CD4-positive, alpha-beta T cell (primary cell): ENCODE measurements at regions of chr10 and their contacts with region 1.

Region 1: DNA sequence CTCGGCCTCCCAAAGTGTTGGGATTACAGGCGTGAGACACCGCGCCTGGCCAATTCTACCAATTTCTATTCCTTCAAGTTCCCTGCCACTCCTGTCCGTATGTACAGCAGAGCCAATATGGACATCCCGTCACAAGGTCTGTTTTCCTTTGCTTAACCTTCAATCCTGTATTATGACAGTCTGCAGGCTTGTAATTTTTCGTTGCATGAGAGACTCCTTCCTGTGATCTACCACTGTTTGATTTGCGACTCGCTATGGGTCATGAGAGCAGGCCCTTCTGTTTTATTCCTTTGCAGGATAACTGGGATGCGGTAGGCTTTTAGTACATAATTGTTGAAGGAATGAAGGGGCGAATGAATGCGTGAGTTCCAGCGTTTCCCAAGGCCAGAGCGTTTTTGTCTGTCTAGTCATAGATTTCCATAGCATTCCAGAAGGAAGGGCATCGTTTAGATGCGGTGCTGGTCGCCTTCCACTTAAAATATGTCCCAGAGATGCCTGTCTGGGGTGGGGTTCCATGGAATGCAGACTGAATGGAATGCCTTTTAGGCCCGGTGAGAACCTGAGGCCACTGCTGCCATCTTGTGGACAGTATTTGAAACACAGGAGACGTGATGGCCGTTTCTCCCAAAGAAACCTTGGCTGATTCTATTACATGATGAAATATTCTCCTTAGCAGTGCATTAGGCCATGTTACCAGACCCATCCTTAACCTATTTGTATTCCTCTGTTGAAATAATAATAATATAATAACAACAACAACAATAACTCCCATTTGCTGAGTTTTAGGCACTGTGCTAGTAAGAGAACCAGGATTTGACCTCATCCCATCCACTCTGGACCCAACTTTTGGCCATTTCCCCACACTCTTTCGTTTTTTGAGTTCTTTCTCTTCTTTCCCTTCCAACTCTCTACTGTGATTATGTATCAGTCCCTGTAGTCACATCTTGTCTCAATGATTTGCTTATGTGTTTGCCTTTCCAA is 193.2 kb downstream of the MYOF start:
- DNase-seq: peak; percentile 20 to 71 (median 36)
- ATAC-seq: no peak
- H3K4me3 ChIP-seq: no peak overlapping the region
- H3K4me3 Mint-ChIP-seq: no peak overlapping the region
- H3K27ac ChIP-seq: no peak overlapping the region
- H3K27ac Mint-ChIP-seq: no peak overlapping the region
- H3K4me1 ChIP-seq: no peaks in the 10 kb centered on the region
- H3K4me1 Mint-ChIP-seq: no peaks in the 10 kb centered on the region
- H3K27me3 ChIP-seq: no peaks in the 10 kb centered on the region
- H3K27me3 Mint-ChIP-seq: no peaks in the 10 kb centered on the region
- CTCF ChIP-seq: peak; percentile 70

Region 2: DNA sequence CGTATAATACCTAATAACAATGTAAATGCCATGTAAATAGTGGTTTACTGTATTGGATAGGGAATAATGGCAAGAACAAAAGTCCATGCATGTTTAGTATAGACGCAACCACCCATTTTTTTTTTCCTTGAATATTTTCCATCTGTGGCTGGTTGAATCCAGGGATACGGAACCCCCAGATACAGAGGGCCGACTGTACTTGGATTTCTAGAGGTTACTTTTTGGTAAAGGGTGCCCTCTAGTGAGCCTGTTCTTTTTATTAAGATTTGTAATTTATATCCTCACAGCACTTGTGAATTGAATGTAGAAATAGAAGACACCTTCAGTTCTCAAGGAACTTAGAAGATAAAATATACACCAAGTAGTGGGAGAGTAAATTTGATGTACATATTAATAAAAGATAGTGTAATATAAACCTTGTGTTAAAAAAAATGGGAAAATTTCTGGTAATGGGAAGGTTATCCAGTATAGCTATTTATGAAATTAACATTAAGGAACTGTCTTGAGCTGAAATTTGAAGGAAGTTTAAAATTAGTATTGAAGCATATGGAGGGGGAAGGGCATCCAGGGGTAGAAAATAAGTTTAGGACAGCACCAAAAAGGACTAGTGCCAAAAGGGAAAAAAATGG is 408.6 kb before region 1 on chr10:
- CTCF ChIA-PET with region 1: no interaction called
- POLR2A ChIA-PET with region 1: no interaction called
- intact Hi-C with region 1: loop called (anchors 2 to 5 kb)
- DNase-seq: peak in 4 of 14 experiments; percentile 13 to 56 (median 56)
- ATAC-seq: peak; percentile 39
- H3K4me3 ChIP-seq: no peak overlapping the region
- H3K4me3 Mint-ChIP-seq: no peak overlapping the region
- H3K27ac ChIP-seq: no peak overlapping the region
- H3K27ac Mint-ChIP-seq: no peak overlapping the region
- H3K4me1 ChIP-seq: peaks cover 5% of the 10 kb centered on the region
- H3K4me1 Mint-ChIP-seq: peaks cover 29% of the 10 kb centered on the region
- H3K27me3 ChIP-seq: no peaks in the 10 kb centered on the region
- H3K27me3 Mint-ChIP-seq: no peaks in the 10 kb centered on the region
- CTCF ChIP-seq: peak; percentile 75

Region 3: GRCh38 chr10:92886334-92886961 is 402.5 kb before region 1 on chr10:
- CTCF ChIA-PET with region 1: no interaction called
- POLR2A ChIA-PET with region 1: no interaction called
- intact Hi-C with region 1: loop called (anchors 2 to 5 kb)
- DNase-seq: no peak
- ATAC-seq: no peak
- H3K4me3 ChIP-seq: no peak overlapping the region
- H3K4me3 Mint-ChIP-seq: no peak overlapping the region
- H3K27ac ChIP-seq: no peak overlapping the region
- H3K27ac Mint-ChIP-seq: no peak overlapping the region
- H3K4me1 ChIP-seq: no peaks in the 10 kb centered on the region
- H3K4me1 Mint-ChIP-seq: peaks cover 14% of the 10 kb centered on the region
- H3K27me3 ChIP-seq: no peaks in the 10 kb centered on the region
- H3K27me3 Mint-ChIP-seq: no peaks in the 10 kb centered on the region
- CTCF ChIP-seq: no peak

Region 4: GRCh38 chr10:92965314-92965713 is 323.6 kb before region 1 on chr10:
- CTCF ChIA-PET with region 1: no interaction called
- POLR2A ChIA-PET with region 1: no interaction called
- intact Hi-C with region 1: loop called in 1 of 2 experiments (anchors 5 kb)
- DNase-seq: peak in 3 of 14 experiments; percentile 33 to 49 (median 42)
- ATAC-seq: no peak
- H3K4me3 ChIP-seq: no peak overlapping the region
- H3K4me3 Mint-ChIP-seq: no peak overlapping the region
- H3K27ac ChIP-seq: no peak overlapping the region
- H3K27ac Mint-ChIP-seq: no peak overlapping the region
- H3K4me1 ChIP-seq: no peaks in the 10 kb centered on the region
- H3K4me1 Mint-ChIP-seq: no peaks in the 10 kb centered on the region
- H3K27me3 ChIP-seq: no peaks in the 10 kb centered on the region
- H3K27me3 Mint-ChIP-seq: no peaks in the 10 kb centered on the region
- CTCF ChIP-seq: peak; percentile 74

Region 5: DNA sequence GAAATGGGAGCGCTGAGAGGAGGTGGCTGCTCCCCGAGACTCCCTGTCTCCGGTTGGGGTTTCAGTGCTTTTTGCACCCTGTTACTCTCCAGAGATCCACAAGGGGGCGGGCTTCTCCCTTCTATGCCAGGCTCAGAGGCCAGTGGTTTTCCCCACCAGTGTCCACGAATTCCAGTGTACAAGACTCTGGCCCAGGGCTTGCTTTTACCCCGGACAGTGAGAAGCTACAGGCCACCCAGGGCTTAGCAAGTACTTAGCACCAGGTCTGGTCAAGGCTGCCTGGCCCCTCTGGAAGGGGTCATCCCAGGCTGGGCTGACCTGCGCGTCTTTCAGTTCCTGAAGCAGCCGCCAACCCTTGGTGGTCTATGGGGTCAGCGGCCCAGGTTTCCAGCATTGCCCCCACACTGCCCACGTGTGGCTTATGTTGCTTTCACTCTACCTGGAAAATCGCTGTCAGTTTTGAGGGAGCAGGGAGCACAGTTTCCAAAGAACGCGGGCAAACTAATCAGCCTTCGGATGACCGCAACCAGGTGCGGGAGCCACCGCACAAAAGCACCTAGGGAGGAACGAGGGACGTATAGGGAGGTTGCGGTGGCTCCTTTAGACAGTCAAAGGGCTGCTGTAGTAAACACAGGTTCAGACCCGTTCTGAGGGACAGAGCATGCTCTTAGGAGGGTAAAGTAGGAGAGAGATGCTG is 208.4 kb before region 1 on chr10:
- CTCF ChIA-PET with region 1: no interaction called
- POLR2A ChIA-PET with region 1: no interaction called
- intact Hi-C with region 1: loop called (anchors 1 kb)
- DNase-seq: peak; percentile 27 to 70 (median 38)
- ATAC-seq: peak; percentile 64
- H3K4me3 ChIP-seq: no peak overlapping the region
- H3K4me3 Mint-ChIP-seq: peak overlapping the region; percentile 23
- H3K27ac ChIP-seq: no peak overlapping the region
- H3K27ac Mint-ChIP-seq: no peak overlapping the region
- H3K4me1 ChIP-seq: peaks cover 7% of the 10 kb centered on the region
- H3K4me1 Mint-ChIP-seq: peaks cover 5% of the 10 kb centered on the region
- H3K27me3 ChIP-seq: peaks cover 24 to 38% of the 10 kb centered on the region in 2 experiments
- H3K27me3 Mint-ChIP-seq: peaks cover 57% of the 10 kb centered on the region
- CTCF ChIP-seq: peak; percentile 76

Region 6: GRCh38 chr10:93115661-93116383 is 173.1 kb before region 1 on chr10:
- CTCF ChIA-PET with region 1: no interaction called
- POLR2A ChIA-PET with region 1: no interaction called
- intact Hi-C with region 1: loop called (anchors 1 to 2 kb)
- DNase-seq: peak; percentile 58 to 86 (median 64)
- ATAC-seq: peak; percentile 79
- H3K4me3 ChIP-seq: no peak overlapping the region
- H3K4me3 Mint-ChIP-seq: peak overlapping the region; percentile 1
- H3K27ac ChIP-seq: no peak overlapping the region
- H3K27ac Mint-ChIP-seq: no peak overlapping the region
- H3K4me1 ChIP-seq: peaks cover 14% of the 10 kb centered on the region
- H3K4me1 Mint-ChIP-seq: peaks cover 17% of the 10 kb centered on the region
- H3K27me3 ChIP-seq: no peaks in the 10 kb centered on the region
- H3K27me3 Mint-ChIP-seq: peaks cover 20% of the 10 kb centered on the region
- CTCF ChIP-seq: peak; percentile 49